ENCODE measurements at regions of chr5 and their contacts with region 1.

Region 1: GRCh38 chr5:10627160-10627701 is 63.4 kb downstream of the ANKRD33B start:
- DNase-seq: no peak
- H3K4me3 ChIP-seq: peak overlapping the region in 6 of 8 donors; percentile 24 to 63 (median 30)
- H3K27ac ChIP-seq: peak overlapping the region in 7 of 8 donors; percentile 46 to 77 (median 56)
- H3K4me1 ChIP-seq: peaks cover 20 to 85% (median 49%) of the 10 kb centered on the region in 6 donors
- H3K27me3 ChIP-seq: no peaks in the 10 kb centered on the region
- CTCF ChIP-seq: no peak
- POLR2A ChIP-seq: no peak

Region 2: GRCh38 chr5:10201223-10201868 is 425.9 kb before region 1 on chr5:
- intact Hi-C with region 1: no loop called
- DNase-seq: no peak
- H3K4me3 ChIP-seq: no peak overlapping the region
- H3K27ac ChIP-seq: no peak overlapping the region
- H3K4me1 ChIP-seq: no peaks in the 10 kb centered on the region
- H3K27me3 ChIP-seq: no peaks in the 10 kb centered on the region
- CTCF ChIP-seq: no peak
- POLR2A ChIP-seq: no peak

Region 3: GRCh38 chr5:10283927-10284635 is 343.1 kb before region 1 on chr5:
- intact Hi-C with region 1: loop called (anchors 5 kb)
- DNase-seq: peak; percentile 95
- H3K4me3 ChIP-seq: peak overlapping the region in 1 of 8 donors; percentile 13
- H3K27ac ChIP-seq: no peak overlapping the region
- H3K4me1 ChIP-seq: peaks cover 0 to 18% (median 10%) of the 10 kb centered on the region in 6 donors
- H3K27me3 ChIP-seq: no peaks in the 10 kb centered on the region
- CTCF ChIP-seq: peak; percentile 69 to 96 (median 88)
- POLR2A ChIP-seq: no peak

Region 4: DNA sequence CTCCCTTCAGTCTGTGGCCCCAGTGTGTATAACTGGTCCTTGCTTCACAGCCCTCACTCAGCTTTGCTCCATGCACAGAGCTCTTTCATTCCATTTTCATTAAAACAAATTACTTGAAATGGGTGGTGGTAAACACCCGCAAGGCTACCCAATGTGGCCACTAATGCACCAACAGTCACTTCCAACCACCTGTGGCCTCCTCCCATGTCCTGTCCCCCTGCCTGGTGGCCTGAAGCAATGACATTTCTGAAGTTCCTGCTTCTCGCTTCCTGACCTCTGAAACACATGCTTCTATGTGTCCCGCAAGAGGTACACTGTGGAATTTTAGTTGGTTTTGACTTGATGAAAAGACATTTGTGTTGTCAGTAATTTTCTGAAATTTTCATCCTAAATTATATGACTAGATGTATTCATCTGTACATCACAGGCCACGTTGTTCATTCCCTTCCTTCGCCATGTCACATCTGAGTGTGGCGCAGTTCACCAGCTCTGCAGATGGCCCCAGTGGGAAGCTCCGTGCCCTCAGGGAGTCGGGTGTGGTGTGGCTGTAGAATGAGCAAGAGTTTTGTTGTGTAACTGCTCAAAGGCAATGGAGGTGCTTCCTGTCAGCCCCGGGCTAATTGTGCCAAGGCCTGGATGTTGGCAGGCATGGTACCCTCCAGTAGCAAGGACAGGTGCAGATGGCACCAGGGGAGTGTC is 175.9 kb before region 1 on chr5:
- intact Hi-C with region 1: loop called (anchors 2 kb)
- DNase-seq: no peak
- H3K4me3 ChIP-seq: no peak overlapping the region
- H3K27ac ChIP-seq: peak overlapping the region in 5 of 8 donors; percentile 6 to 57 (median 49)
- H3K4me1 ChIP-seq: peaks cover 1 to 72% (median 28%) of the 10 kb centered on the region in 6 donors
- H3K27me3 ChIP-seq: no peaks in the 10 kb centered on the region
- CTCF ChIP-seq: no peak
- POLR2A ChIP-seq: no peak

Region 5: DNA sequence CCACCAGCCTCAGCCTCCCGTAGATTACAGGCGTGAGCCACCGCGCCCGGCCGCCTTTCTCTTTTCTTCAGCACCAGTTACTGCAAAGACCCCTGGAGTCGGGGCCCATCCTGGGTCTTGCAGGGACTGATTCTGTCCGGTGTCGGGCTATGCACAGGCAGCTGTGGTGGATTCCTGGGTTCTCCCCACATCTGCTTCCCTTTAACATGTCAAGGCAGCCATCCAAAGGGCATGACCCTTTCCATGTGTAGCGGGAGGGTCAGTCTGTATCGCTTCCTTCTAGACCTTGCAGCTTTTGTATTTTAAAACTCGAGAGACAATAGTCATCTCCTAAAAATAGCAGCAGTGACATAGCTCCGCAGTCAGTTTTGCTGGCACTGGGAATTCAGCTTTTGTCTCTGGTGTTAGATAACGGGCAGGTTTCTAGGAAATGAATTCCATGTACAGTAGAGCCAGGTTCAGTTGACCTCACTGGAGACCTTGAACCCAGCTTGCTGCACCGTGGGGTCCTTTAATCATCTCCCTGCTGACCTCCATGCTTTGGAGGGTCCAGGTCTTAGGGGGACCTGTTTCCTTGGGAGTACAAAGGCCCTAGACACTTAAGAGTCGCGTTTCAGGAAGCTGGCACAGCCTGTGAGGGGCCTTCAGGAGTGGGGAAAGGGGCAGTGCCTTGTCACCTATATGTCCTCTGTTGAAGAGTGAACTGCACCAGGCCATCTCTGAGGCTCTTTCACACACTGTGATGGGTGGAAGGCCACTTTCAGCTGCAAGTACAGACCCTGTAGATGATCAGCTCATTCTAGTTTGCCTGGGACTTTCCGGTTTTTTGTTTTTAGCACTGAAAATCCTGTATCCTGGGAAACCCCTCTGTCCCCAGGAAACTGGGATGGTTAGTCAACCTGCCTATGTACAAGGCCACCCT is 49.6 kb before region 1 on chr5:
- intact Hi-C with region 1: loop called (anchors 10 kb)
- DNase-seq: peak; percentile 78
- H3K4me3 ChIP-seq: no peak overlapping the region
- H3K27ac ChIP-seq: peak overlapping the region in 7 of 8 donors; percentile 22 to 76 (median 66)
- H3K4me1 ChIP-seq: peaks cover 25 to 80% (median 55%) of the 10 kb centered on the region in 6 donors
- H3K27me3 ChIP-seq: no peaks in the 10 kb centered on the region
- CTCF ChIP-seq: no peak
- POLR2A ChIP-seq: no peak

Region 6: GRCh38 chr5:10994088-10994986 is 367.1 kb after region 1 on chr5:
- intact Hi-C with region 1: no loop called
- DNase-seq: no peak
- H3K4me3 ChIP-seq: no peak overlapping the region
- H3K27ac ChIP-seq: no peak overlapping the region
- H3K4me1 ChIP-seq: no peaks in the 10 kb centered on the region
- H3K27me3 ChIP-seq: peaks cover 0 to 2% (median 0%) of the 10 kb centered on the region in 7 donors
- CTCF ChIP-seq: no peak
- POLR2A ChIP-seq: no peak